ENCODE measurements at regions of chr10 and their contacts with region 1.

Region 1: GRCh38 chr10:93080350-93081046 is 6.8 kb downstream of the CYP26A1 start:
- DNase-seq: no peak
- ATAC-seq: peak; percentile 48 to 71 (median 56)
- H3K4me3 ChIP-seq: no peak overlapping the region
- H3K27ac ChIP-seq: no peak overlapping the region
- H3K4me1 ChIP-seq: no peaks in the 10 kb centered on the region
- H3K27me3 ChIP-seq: peaks cover 0 to 58% (median 6%) of the 10 kb centered on the region in 3 donors
- CTCF ChIP-seq: peak; percentile 65

Region 2: GRCh38 chr10:93261961-93262610 is 181.6 kb after region 1 on chr10:
- intact Hi-C with region 1: no loop called
- DNase-seq: no peak
- ATAC-seq: no peak
- H3K4me3 ChIP-seq: no peak overlapping the region
- H3K27ac ChIP-seq: no peak overlapping the region
- H3K4me1 ChIP-seq: no peaks in the 10 kb centered on the region
- H3K27me3 ChIP-seq: no peaks in the 10 kb centered on the region
- CTCF ChIP-seq: no peak

Region 3: DNA sequence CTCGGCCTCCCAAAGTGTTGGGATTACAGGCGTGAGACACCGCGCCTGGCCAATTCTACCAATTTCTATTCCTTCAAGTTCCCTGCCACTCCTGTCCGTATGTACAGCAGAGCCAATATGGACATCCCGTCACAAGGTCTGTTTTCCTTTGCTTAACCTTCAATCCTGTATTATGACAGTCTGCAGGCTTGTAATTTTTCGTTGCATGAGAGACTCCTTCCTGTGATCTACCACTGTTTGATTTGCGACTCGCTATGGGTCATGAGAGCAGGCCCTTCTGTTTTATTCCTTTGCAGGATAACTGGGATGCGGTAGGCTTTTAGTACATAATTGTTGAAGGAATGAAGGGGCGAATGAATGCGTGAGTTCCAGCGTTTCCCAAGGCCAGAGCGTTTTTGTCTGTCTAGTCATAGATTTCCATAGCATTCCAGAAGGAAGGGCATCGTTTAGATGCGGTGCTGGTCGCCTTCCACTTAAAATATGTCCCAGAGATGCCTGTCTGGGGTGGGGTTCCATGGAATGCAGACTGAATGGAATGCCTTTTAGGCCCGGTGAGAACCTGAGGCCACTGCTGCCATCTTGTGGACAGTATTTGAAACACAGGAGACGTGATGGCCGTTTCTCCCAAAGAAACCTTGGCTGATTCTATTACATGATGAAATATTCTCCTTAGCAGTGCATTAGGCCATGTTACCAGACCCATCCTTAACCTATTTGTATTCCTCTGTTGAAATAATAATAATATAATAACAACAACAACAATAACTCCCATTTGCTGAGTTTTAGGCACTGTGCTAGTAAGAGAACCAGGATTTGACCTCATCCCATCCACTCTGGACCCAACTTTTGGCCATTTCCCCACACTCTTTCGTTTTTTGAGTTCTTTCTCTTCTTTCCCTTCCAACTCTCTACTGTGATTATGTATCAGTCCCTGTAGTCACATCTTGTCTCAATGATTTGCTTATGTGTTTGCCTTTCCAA is 208.4 kb after region 1 on chr10:
- intact Hi-C with region 1: loop called in 1 of 2 experiments (anchors 2 kb)
- DNase-seq: peak; percentile 51 to 64
- ATAC-seq: peak in 2 of 4 donors; percentile 62
- H3K4me3 ChIP-seq: no peak overlapping the region
- H3K27ac ChIP-seq: no peak overlapping the region
- H3K4me1 ChIP-seq: no peaks in the 10 kb centered on the region
- H3K27me3 ChIP-seq: no peaks in the 10 kb centered on the region
- CTCF ChIP-seq: peak; percentile 65

Region 4: DNA sequence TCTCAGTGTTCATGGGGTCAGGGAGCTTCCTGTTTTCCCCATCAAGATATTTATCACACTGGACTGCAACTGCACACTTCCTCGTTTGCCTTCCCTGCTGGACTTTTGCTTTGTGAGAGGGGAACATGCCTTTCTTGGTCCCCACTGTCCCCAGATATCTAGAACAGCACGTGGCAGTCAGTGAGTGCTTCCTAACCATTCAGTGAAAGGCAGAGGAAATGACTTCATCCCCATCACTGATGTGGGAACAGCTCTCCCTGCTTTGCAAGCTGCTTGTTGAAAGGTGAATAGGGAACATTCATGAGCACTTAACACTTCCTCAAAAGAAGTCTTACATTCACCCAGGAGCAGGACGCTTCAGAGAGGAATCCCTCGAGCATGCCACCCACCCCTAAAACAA is 266.2 kb after region 1 on chr10:
- intact Hi-C with region 1: loop called in 1 of 2 experiments (anchors 10 kb)
- DNase-seq: no peak
- ATAC-seq: no peak
- H3K4me3 ChIP-seq: no peak overlapping the region
- H3K27ac ChIP-seq: no peak overlapping the region
- H3K4me1 ChIP-seq: no peaks in the 10 kb centered on the region
- H3K27me3 ChIP-seq: no peaks in the 10 kb centered on the region
- CTCF ChIP-seq: no peak

Region 5: DNA sequence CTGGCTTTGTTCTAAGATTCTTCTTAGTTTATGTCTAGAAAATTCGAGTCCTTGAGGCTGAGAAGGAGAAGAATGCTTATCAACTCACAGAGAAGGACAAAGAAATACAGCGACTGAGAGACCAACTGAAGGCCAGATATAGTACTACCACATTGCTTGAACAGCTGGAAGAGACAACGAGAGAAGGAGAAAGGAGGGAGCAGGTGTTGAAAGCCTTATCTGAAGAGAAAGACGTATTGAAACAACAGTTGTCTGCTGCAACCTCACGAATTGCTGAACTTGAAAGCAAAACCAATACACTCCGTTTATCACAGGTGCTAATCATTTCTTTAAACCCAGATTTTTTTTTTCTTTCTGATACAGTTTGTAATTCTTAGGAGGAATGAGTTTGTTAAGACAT is 422.6 kb after region 1 on chr10:
- intact Hi-C with region 1: loop called in 1 of 2 experiments (anchors 10 kb)
- DNase-seq: no peak
- ATAC-seq: no peak
- H3K4me3 ChIP-seq: no peak overlapping the region
- H3K27ac ChIP-seq: no peak overlapping the region
- H3K4me1 ChIP-seq: no peaks in the 10 kb centered on the region
- H3K27me3 ChIP-seq: no peaks in the 10 kb centered on the region
- CTCF ChIP-seq: no peak